B cell (primary cell): ENCODE measurements at regions of chr7 and their contacts with region 1.

Region 1: GRCh38 chr7:74401137-74401859 is 52.4 kb upstream of the GTF2IRD1 start:
- DNase-seq: peak; percentile 82
- ATAC-seq: peak; percentile 78
- H3K4me3 ChIP-seq: no peak overlapping the region
- H3K4me3 Mint-ChIP-seq: no peak overlapping the region
- H3K27ac ChIP-seq: no peak overlapping the region
- H3K27ac Mint-ChIP-seq: no peak overlapping the region
- H3K4me1 ChIP-seq: no peaks in the 10 kb centered on the region
- H3K4me1 Mint-ChIP-seq: no peaks in the 10 kb centered on the region
- H3K27me3 ChIP-seq: no peaks in the 10 kb centered on the region
- H3K27me3 Mint-ChIP-seq: no peaks in the 10 kb centered on the region
- CTCF ChIP-seq: peak; percentile 89

Region 2: GRCh38 chr7:74068393-74069085 is 332.8 kb before region 1 on chr7:
- CTCF ChIA-PET with region 1: interaction called, 110 read pairs
- POLR2A ChIA-PET with region 1: interaction called, 6 read pairs
- intact Hi-C with region 1: loop called (anchors 1 kb)
- DNase-seq: peak; percentile 17
- ATAC-seq: no peak
- H3K4me3 ChIP-seq: no peak overlapping the region
- H3K4me3 Mint-ChIP-seq: no peak overlapping the region
- H3K27ac ChIP-seq: no peak overlapping the region
- H3K27ac Mint-ChIP-seq: no peak overlapping the region
- H3K4me1 ChIP-seq: peaks cover 0 to 3% of the 10 kb centered on the region in 2 donors
- H3K4me1 Mint-ChIP-seq: no peaks in the 10 kb centered on the region
- H3K27me3 ChIP-seq: no peaks in the 10 kb centered on the region
- H3K27me3 Mint-ChIP-seq: no peaks in the 10 kb centered on the region
- CTCF ChIP-seq: no peak

Region 3: GRCh38 chr7:74231232-74231590 is 170.1 kb before region 1 on chr7:
- CTCF ChIA-PET with region 1: interaction called, 18 read pairs
- POLR2A ChIA-PET with region 1: no interaction called
- intact Hi-C with region 1: no loop called
- DNase-seq: peak; percentile 92
- ATAC-seq: peak; percentile 84
- H3K4me3 ChIP-seq: no peak overlapping the region
- H3K4me3 Mint-ChIP-seq: peak overlapping the region; percentile 79
- H3K27ac ChIP-seq: peak overlapping the region; percentile 83 to 92
- H3K27ac Mint-ChIP-seq: peak overlapping the region; percentile 97
- H3K4me1 ChIP-seq: peaks cover 59 to 83% of the 10 kb centered on the region in 2 donors
- H3K4me1 Mint-ChIP-seq: peaks cover 59% of the 10 kb centered on the region
- H3K27me3 ChIP-seq: no peaks in the 10 kb centered on the region
- H3K27me3 Mint-ChIP-seq: no peaks in the 10 kb centered on the region
- CTCF ChIP-seq: no peak

Region 4: GRCh38 chr7:74289018-74289658 is 112.2 kb before region 1 on chr7 and contains the start of gene CLIP2:
- CTCF ChIA-PET with region 1: interaction called, 12 read pairs
- POLR2A ChIA-PET with region 1: no interaction called
- intact Hi-C with region 1: no loop called
- DNase-seq: peak; percentile 85
- ATAC-seq: peak; percentile 74
- H3K4me3 ChIP-seq: peak within 1 kb of the TSS; percentile 34 to 73 (median 61)
- H3K4me3 Mint-ChIP-seq: peak within 1 kb of the TSS; percentile 96
- H3K27ac ChIP-seq: peak within 1 kb of the TSS; percentile 29 to 62
- H3K27ac Mint-ChIP-seq: peak within 1 kb of the TSS; percentile 93
- H3K4me1 ChIP-seq: peaks cover 32 to 47% of the 10 kb centered on the region in 2 donors
- H3K4me1 Mint-ChIP-seq: peaks cover 58% of the 10 kb centered on the region
- H3K27me3 ChIP-seq: no peaks in the 10 kb centered on the region
- H3K27me3 Mint-ChIP-seq: no peaks in the 10 kb centered on the region
- CTCF ChIP-seq: no peak
- total RNA-seq, gene CLIP2: 47.9 and 49.5 TPM in 2 replicates

Region 5: DNA sequence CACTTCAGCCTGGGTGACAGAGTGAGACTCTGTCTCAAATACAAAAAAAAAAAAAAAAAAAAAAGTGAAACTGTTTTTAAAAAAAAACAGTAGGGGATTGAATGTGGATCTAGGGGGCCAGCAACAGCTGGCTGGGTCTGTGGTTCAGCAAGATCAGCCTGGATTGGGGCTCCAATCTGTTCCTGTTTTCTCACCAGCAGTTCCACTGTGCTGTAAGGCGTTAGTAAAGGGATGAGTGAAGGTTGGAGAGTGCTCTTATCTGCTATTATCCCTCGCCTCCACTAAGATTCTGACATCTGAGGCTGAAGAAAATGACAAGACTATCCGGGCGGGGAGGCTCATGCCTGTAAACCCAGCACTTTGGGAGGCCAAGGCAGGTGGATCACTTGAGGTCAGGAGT is 10.8 kb after region 1 on chr7:
- CTCF ChIA-PET with region 1: interaction called, 20 read pairs
- POLR2A ChIA-PET with region 1: no interaction called
- intact Hi-C with region 1: no loop called
- DNase-seq: no peak
- ATAC-seq: no peak
- H3K4me3 ChIP-seq: no peak overlapping the region
- H3K4me3 Mint-ChIP-seq: no peak overlapping the region
- H3K27ac ChIP-seq: no peak overlapping the region
- H3K27ac Mint-ChIP-seq: no peak overlapping the region
- H3K4me1 ChIP-seq: no peaks in the 10 kb centered on the region
- H3K4me1 Mint-ChIP-seq: no peaks in the 10 kb centered on the region
- H3K27me3 ChIP-seq: peaks cover 0 to 2% (median 0%) of the 10 kb centered on the region in 4 experiments
- H3K27me3 Mint-ChIP-seq: peaks cover 4% of the 10 kb centered on the region
- CTCF ChIP-seq: no peak